ENCODE measurements at regions of chr1 and their contacts with region 1.

Region 1: DNA sequence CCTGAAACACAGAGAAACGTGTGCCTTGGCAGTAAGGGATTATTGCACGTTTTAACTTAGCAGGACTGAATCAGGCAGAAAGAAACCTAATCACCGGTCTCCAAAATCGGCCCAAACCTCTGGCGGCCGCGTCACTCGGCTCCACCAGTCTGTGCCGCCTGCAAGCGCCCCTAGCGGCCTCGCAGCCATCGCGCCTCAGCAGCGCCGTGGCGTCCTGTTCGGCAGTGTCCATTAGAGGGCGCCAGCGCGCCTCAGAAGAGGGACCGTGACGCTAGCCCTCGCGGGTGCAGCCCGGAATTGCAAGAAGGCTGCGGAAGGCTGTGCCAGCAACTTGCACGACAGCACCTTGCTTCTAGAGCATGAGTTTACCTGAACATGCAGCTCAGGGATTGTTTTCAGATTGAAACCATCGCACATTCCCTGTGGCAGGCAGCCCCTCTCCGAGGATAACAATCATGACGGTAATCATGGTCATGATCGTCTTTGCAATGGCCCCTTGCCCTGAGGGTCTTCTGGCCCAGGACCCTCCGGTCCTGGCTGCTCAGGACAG is 164.4 kb downstream of the TRIM33 start:
- DNase-seq: peak; percentile 97
- H3K4me3 ChIP-seq: peak overlapping the region; percentile 28
- H3K27ac ChIP-seq: peak overlapping the region; percentile 40
- H3K4me1 ChIP-seq: peaks cover 14% of the 10 kb centered on the region
- H3K27me3 ChIP-seq: no peaks in the 10 kb centered on the region
- CTCF ChIP-seq: peak; percentile 100

Region 2: GRCh38 chr1:114428083-114428749 is 81.7 kb after region 1 on chr1:
- CTCF ChIA-PET with region 1: no interaction called
- POLR2A ChIA-PET with region 1: no interaction called
- intact Hi-C with region 1: loop called (anchors 5 kb)
- DNase-seq: peak; percentile 32
- H3K4me3 ChIP-seq: no peak overlapping the region
- H3K27ac ChIP-seq: no peak overlapping the region
- H3K4me1 ChIP-seq: peaks cover 9% of the 10 kb centered on the region
- H3K27me3 ChIP-seq: no peaks in the 10 kb centered on the region
- CTCF ChIP-seq: peak; percentile 72

Region 3: GRCh38 chr1:114670083-114671010 is 323.8 kb after region 1 on chr1:
- CTCF ChIA-PET with region 1: no interaction called
- POLR2A ChIA-PET with region 1: no interaction called
- intact Hi-C with region 1: loop called (anchors 10 kb)
- DNase-seq: peak; percentile 92
- H3K4me3 ChIP-seq: peak overlapping the region; percentile 70
- H3K27ac ChIP-seq: no peak overlapping the region
- H3K4me1 ChIP-seq: no peaks in the 10 kb centered on the region
- H3K27me3 ChIP-seq: no peaks in the 10 kb centered on the region
- CTCF ChIP-seq: no peak

Region 4: GRCh38 chr1:114716304-114717170 is 370.0 kb after region 1 on chr1 and contains the start of gene NRAS:
- CTCF ChIA-PET with region 1: no interaction called
- POLR2A ChIA-PET with region 1: no interaction called
- intact Hi-C with region 1: loop called (anchors 5 kb)
- DNase-seq: peak; percentile 96
- H3K4me3 ChIP-seq: peak within 1 kb of the TSS; percentile 95
- H3K27ac ChIP-seq: peak within 1 kb of the TSS; percentile 89
- H3K4me1 ChIP-seq: peaks cover 7% of the 10 kb centered on the region
- H3K27me3 ChIP-seq: no peaks in the 10 kb centered on the region
- CTCF ChIP-seq: no peak
- total RNA-seq, gene NRAS: 72.2 and 79.1 TPM in 2 replicates

Region 5: GRCh38 chr1:115052454-115053083 is 706.0 kb after region 1 on chr1:
- CTCF ChIA-PET with region 1: no interaction called
- POLR2A ChIA-PET with region 1: no interaction called
- intact Hi-C with region 1: loop called (anchors 10 kb)
- DNase-seq: peak; percentile 76
- H3K4me3 ChIP-seq: no peak overlapping the region
- H3K27ac ChIP-seq: no peak overlapping the region
- H3K4me1 ChIP-seq: no peaks in the 10 kb centered on the region
- H3K27me3 ChIP-seq: no peaks in the 10 kb centered on the region
- CTCF ChIP-seq: peak; percentile 94

Region 6: DNA sequence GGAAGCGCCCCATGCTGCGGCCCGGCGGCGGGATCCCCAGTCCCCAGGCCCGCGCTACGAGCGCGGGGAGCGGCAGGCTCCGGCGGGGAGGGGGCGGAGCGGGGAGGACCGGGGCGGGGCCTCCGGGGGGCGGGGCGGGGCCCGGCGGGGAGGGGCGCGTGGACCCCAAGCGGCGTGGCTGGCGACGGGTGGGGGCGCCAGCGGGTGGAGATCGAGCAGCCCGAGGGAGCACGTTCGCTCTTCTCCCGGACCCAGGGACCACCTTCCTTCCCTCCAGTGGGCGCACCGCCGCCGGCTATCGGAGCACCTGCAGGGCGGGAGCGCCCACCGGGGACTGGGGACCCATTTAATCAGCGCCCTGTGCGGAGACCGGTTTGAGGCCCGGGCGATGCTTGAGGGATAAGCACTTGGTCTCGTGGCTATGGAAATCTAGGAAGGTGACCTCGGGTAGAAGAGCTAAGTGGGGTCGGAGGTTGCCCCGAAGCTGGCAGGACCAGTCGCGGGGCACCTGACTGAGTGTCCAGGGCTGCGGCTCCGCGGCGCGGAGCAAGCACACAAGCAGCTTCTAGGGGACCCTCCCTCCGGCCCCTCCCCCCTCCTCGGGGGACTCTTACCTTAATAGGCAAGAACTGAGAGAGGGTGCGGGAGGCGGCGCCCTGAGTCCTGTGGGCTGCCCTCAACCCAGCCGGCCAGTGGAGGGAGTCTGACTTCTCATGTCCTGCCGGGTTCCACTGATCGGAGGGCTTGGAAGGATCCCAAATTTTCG is 743.0 kb after region 1 on chr1 and contains the start of gene TSPAN2:
- CTCF ChIA-PET with region 1: no interaction called
- POLR2A ChIA-PET with region 1: no interaction called
- intact Hi-C with region 1: no loop called
- DNase-seq: peak; percentile 42
- H3K4me3 ChIP-seq: peak within 1 kb of the TSS; percentile 57
- H3K27ac ChIP-seq: no peak within 1 kb of the TSS
- H3K4me1 ChIP-seq: peaks cover 24% of the 10 kb centered on the region
- H3K27me3 ChIP-seq: no peaks in the 10 kb centered on the region
- CTCF ChIP-seq: 0 out of 2 replicates have a peak, but pooled peaks have one; percentile 7
- total RNA-seq, gene TSPAN2: 1.9 and 2.8 TPM in 2 replicates

Region 7: DNA sequence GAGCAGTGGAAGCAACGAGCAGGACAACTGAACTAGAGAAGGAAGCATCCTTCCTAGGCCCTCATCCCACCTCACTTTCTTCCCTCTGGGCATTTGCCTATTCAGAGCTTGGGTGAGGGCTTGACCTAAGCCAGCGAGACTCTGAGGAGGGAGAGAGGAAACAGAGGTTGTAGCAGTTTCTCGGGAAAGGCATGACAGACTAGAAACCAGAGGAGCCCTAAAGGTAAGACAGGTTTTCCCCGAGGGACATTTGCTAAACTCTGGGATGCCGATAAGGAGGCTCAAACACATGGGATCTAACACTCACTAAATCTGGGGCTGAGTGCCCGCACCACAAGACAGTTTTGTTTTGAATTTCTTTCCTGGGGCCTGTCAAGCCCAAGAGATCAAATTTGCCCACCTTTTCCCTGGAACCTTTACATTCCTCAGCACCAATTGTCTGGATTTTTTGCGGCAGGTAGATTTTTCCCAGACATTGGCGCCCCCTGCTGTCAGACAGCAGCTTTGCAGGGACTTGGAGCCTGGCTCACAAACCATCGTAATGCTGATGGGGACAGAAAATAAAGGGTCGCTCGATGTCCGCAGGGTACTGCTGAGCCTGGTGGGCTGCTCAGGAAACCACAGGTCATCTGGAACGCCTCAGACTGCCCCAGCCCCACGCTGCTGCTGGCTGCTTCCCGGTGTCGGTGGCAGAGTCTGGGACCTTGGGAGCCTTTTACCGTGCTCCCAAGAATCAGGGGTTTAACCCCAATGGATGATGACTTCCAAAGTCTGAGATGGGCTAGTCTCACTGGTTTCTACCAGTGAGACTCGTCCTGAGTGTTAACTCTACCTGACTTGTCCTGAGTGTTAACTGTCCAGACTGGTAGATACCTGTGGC is 766.2 kb after region 1 on chr1:
- CTCF ChIA-PET with region 1: no interaction called
- POLR2A ChIA-PET with region 1: no interaction called
- intact Hi-C with region 1: loop called (anchors 5 kb)
- DNase-seq: peak; percentile 40
- H3K4me3 ChIP-seq: no peak overlapping the region
- H3K27ac ChIP-seq: no peak overlapping the region
- H3K4me1 ChIP-seq: no peaks in the 10 kb centered on the region
- H3K27me3 ChIP-seq: no peaks in the 10 kb centered on the region
- CTCF ChIP-seq: peak; percentile 95

Measured in A673 (cell line).